Esophagus squamous epithelium (tissue), 5 donors: ENCODE measurements at regions of chr7 and their contacts with region 1.

Region 1: GRCh38 chr7:122225874-122226273 is 78.7 kb downstream of the FEZF1 start:
- DNase-seq: no peak
- H3K4me3 ChIP-seq: no peak overlapping the region
- H3K27ac ChIP-seq: no peak overlapping the region
- H3K4me1 ChIP-seq: no peaks in the 10 kb centered on the region
- H3K27me3 ChIP-seq: no peaks in the 10 kb centered on the region
- CTCF ChIP-seq: no peak
- POLR2A ChIP-seq: no peak

Region 2: GRCh38 chr7:122014697-122015096 is 211.2 kb before region 1 on chr7:
- intact Hi-C with region 1: no loop called
- DNase-seq: no peak
- H3K4me3 ChIP-seq: no peak overlapping the region
- H3K27ac ChIP-seq: no peak overlapping the region
- H3K4me1 ChIP-seq: no peaks in the 10 kb centered on the region
- H3K27me3 ChIP-seq: no peaks in the 10 kb centered on the region
- CTCF ChIP-seq: peak in 1 of 6 experiments; percentile 5
- POLR2A ChIP-seq: no peak

Region 3: GRCh38 chr7:122092964-122093797 is 132.7 kb before region 1 on chr7:
- intact Hi-C with region 1: loop called (anchors 10 kb)
- DNase-seq: peak; percentile 0
- H3K4me3 ChIP-seq: no peak overlapping the region
- H3K27ac ChIP-seq: no peak overlapping the region
- H3K4me1 ChIP-seq: no peaks in the 10 kb centered on the region
- H3K27me3 ChIP-seq: no peaks in the 10 kb centered on the region
- CTCF ChIP-seq: peak in 5 of 6 experiments; percentile 67 to 78 (median 69)
- POLR2A ChIP-seq: no peak